Left ventricle myocardium inferior (tissue), 1 donor: ENCODE measurements at regions of chr5 and their contacts with region 1.

Region 1: DNA sequence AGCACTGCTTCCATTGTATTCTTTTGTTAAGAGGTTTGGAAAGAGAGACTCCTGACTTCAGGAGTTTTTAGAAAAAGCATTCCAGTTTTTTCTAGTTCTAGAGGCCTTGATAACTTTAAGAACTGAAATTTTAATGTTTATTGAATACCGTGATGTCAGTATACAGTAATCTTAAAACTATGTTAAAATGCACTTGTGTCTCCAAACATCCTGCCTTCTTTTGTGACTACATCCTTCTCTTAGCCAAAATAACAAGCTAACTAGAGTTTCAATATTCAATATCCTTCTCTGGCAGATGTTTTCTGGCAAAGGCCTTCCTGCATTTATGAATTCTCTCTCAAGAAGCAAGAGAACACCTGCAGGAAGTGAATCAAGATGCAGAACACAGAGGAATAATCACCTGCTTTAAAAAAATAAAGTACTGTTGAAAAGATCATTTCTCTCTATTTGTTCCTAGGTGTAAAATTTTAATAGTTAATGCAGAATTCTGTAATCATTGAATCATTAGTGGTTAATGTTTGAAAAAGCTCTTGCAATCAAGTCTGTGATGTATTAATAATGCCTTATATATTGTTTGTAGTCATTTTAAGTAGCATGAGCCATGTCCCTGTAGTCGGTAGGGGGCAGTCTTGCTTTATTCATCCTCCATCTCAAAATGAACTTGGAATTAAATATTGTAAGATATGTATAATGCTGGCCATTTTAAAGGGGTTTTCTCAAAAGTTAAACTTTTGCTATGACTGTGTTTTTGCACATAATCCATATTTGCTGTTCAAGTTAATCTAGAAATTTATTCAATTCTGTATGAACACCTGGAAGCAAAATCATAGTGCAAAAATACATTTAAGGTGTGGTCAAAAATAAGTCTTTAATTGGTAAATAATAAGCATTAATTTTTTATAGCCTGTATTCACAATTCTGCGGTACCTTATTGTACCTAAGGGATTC is 43.1 kb downstream of the NDFIP1 start:
- DNase-seq: no peak
- H3K4me3 ChIP-seq: no peak overlapping the region
- H3K27ac ChIP-seq: no peak overlapping the region
- H3K4me1 ChIP-seq: peaks cover 18% of the 10 kb centered on the region
- H3K27me3 ChIP-seq: no peaks in the 10 kb centered on the region
- CTCF ChIP-seq: peak; percentile 91

Region 2: DNA sequence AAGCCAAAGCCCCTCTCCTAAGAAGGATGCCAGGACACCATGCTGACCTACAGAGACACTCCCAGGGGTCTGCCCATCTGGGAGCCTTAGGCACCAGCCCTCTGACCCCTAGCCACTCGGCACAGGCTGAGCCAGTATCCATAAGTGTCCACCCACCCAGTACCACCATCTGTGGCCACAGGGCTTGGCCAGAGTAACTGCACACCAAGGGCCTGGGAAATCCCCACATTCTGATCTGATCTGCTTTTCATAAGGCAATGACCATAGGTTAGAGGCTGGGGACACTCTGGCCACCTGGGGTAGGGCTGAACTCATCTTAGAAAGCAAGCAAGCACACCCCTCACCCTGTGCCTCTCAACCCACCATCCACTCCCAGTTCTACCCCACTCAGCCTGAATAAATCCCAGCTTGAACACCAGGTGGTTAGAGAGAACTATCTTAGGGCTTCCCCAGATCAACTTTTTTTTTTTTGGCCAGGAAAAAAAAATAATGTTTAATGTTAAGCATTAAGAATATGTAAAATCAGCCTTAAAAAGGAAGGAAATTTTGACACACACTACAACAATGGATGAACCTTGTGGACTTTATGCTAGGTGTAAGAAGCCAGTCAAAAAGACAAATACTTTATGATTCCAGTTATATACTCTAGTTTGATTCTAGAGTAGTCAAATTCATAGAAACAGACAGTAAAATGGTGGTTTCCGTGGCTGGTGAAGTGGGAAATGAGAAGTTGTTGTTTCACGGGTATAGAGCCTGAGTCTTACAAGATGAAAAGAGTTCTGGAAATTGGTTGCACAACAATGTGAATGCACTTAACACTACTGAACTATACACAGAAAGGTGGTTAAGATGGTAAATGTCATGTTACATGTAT is 145.1 kb before region 1 on chr5:
- intact Hi-C with region 1: no loop called
- DNase-seq: no peak
- H3K4me3 ChIP-seq: no peak overlapping the region
- H3K27ac ChIP-seq: no peak overlapping the region
- H3K4me1 ChIP-seq: peaks cover under 1% of the 10 kb centered on the region
- H3K27me3 ChIP-seq: no peaks in the 10 kb centered on the region
- CTCF ChIP-seq: no peak

Region 3: DNA sequence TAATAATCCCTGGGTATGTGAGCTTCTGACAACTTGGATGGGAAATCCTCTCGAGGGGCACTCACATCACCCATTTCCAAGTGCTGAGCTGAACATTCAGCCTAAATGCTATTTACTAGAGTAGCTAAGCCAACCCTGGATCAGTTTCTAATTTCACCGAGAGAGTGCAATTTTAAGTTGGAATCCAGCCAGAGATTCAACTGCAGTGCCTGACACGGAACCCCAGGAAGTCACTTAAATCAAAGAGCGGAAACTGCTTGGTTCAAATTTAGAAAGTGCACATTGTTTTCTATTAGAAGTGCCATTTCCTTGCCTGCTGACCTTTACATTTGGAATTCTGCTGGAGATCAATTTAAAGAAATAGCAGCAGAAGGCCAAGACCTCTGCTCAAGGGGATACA is 164.3 kb after region 1 on chr5:
- intact Hi-C with region 1: loop called (anchors 10 kb)
- DNase-seq: no peak
- H3K4me3 ChIP-seq: peak overlapping the region; percentile 96
- H3K27ac ChIP-seq: peak overlapping the region; percentile 98
- H3K4me1 ChIP-seq: peaks cover 98% of the 10 kb centered on the region
- H3K27me3 ChIP-seq: no peaks in the 10 kb centered on the region
- CTCF ChIP-seq: no peak